ENCODE measurements at regions of chr15 and their contacts with region 1.

Region 1: GRCh38 chr15:64046347-64047153 is at the start of gene DAPK2:
- DNase-seq: peak; percentile 75 to 90 (median 84)
- ATAC-seq: peak; percentile 60 to 91 (median 86)
- H3K4me3 ChIP-seq: peak within 1 kb of the TSS; percentile 56 to 85 (median 72)
- H3K27ac ChIP-seq: peak within 1 kb of the TSS in 11 of 12 donors; percentile 60 to 88 (median 80)
- H3K4me1 ChIP-seq: peaks cover 0 to 63% (median 29%) of the 10 kb centered on the region in 12 donors
- H3K27me3 ChIP-seq: no peaks in the 10 kb centered on the region
- CTCF ChIP-seq: peak; percentile 61 to 94 (median 87)
- POLR2A ChIP-seq: no peak
- total RNA-seq, gene DAPK2: 20.4 to 56.2 (median 26.4) TPM

Region 2: GRCh38 chr15:63752075-63752684 is 294.4 kb before region 1 on chr15:
- intact Hi-C with region 1: loop called in 9 of 10 experiments (anchors 5 kb)
- DNase-seq: peak in 2 of 5 donors; percentile 25 to 36
- ATAC-seq: peak in 3 of 4 donors; percentile 78 to 90 (median 85)
- H3K4me3 ChIP-seq: no peak overlapping the region
- H3K27ac ChIP-seq: no peak overlapping the region
- H3K4me1 ChIP-seq: peaks cover 0 to 3% (median 0%) of the 10 kb centered on the region in 12 donors
- H3K27me3 ChIP-seq: no peaks in the 10 kb centered on the region
- CTCF ChIP-seq: peak; percentile 45 to 84 (median 74)
- POLR2A ChIP-seq: no peak

Region 3: GRCh38 chr15:63826528-63826927 is 220.0 kb before region 1 on chr15:
- intact Hi-C with region 1: loop called in 5 of 10 experiments (anchors 5 kb)
- DNase-seq: no peak
- ATAC-seq: no peak
- H3K4me3 ChIP-seq: no peak overlapping the region
- H3K27ac ChIP-seq: no peak overlapping the region
- H3K4me1 ChIP-seq: peaks cover 0 to 55% (median 35%) of the 10 kb centered on the region in 12 donors
- H3K27me3 ChIP-seq: no peaks in the 10 kb centered on the region
- CTCF ChIP-seq: peak in 5 of 12 donors; percentile 15 to 31 (median 19)
- POLR2A ChIP-seq: no peak

Region 4: DNA sequence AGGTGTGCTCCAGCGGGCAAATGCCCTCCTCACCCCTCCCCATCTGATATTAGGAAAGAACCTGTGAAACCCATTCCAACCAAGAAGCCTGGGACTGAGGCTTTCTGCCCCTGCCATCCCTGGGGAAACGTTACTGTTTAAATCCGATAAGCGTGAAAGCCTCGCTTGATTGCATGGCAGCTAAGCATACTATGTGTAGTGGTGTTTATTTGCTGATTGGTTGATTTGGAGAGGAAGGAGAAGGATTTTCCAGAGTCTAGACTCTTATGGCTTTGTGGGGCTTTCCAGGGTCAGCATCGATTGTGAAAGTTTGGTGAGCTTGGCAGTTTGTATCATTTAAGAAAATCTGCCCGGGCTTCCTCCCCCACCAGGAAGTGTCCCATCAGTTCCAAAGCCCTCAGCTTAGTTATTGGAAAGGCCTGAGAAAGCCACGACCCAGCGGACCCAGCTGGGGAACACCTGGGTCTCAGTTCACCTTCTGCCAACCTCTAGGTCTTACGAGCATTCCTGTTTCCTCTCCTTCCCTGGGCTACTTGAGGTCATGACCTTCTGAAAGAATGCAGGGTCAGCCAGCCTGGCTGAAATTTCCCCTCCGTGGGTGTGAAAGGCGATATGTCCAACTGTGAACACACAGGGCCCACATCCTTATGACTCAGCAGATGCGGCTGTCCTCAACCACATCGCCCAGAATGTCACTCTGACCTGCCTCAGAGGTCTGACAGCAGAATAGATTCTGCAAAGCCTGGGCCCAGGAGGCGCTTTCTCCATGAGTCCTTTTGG is 150.0 kb before region 1 on chr15:
- intact Hi-C with region 1: loop called in 2 of 10 experiments (anchors 5 to 10 kb)
- DNase-seq: peak in 2 of 5 donors; percentile 42 to 63
- ATAC-seq: peak in 3 of 4 donors; percentile 57 to 74 (median 68)
- H3K4me3 ChIP-seq: no peak overlapping the region
- H3K27ac ChIP-seq: peak overlapping the region in 2 of 12 donors; percentile 13 to 68
- H3K4me1 ChIP-seq: peaks cover 0 to 78% (median 9%) of the 10 kb centered on the region in 12 donors
- H3K27me3 ChIP-seq: no peaks in the 10 kb centered on the region
- CTCF ChIP-seq: no peak
- POLR2A ChIP-seq: no peak

Region 5: DNA sequence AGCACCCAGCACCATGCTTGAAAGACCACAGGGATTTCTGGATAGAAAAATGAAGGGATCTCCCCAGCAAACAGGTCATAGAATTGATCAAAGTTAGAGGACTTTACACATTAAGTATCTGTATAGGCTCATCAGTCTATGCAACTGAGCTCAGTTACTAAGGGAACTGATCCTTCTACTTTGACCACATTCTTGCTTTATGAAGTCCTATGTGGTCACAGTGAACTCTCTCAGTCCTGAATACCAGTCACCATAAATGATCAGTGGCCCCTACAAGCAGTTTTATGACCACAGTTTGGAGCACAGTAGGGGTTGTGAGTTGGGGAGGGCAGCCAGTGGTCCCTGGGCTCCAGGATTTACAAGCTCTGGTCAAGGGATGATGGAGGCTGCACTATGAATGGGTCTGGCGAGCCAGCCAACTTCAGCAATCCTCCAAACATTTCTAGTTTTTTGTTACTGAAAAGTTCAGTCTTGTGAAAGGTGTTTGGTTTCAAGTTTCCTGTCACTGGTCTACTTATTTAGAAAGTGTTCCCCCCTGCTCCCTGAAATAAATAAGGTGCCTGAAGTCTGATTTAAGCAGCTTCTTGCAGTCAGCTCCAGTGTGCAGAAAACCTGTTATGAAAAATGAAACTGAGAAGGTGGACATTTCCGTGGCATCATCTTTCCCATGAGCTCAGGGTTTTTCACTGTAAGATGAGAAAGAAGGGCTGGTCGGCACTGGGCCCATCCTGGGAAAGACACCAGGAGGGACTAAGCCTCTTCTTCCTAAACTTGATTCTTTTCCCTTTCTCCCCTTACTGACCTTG is 75.7 kb before region 1 on chr15:
- intact Hi-C with region 1: loop called in 2 of 10 experiments (anchors 5 to 10 kb)
- DNase-seq: no peak
- ATAC-seq: no peak
- H3K4me3 ChIP-seq: no peak overlapping the region
- H3K27ac ChIP-seq: peak overlapping the region; percentile 22 to 89 (median 77)
- H3K4me1 ChIP-seq: peaks cover 3 to 69% (median 38%) of the 10 kb centered on the region in 12 donors
- H3K27me3 ChIP-seq: no peaks in the 10 kb centered on the region
- CTCF ChIP-seq: no peak
- POLR2A ChIP-seq: no peak

Region 6: DNA sequence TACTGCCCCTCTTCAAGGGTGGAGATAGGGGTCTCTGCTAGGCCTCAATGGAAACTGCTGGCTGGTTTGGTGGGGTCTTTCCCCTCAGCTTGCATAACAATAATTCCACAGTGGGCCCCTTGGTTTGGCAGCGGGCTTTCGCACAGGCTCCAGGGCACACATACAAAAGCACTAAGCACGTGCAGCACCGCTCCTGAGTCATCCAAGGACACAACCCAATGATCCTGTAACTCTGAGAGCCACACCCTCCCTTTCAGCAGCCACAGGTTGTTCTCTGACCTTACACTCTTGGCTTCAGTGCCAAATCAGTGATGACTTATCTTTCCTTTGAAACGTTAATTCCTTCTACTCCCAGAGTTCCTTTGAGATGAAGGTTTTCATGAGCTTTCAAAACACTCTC is 42.0 kb before region 1 on chr15:
- intact Hi-C with region 1: loop called in 2 of 10 experiments (anchors 5 to 10 kb)
- DNase-seq: peak in 2 of 5 donors; percentile 49 to 51
- ATAC-seq: peak; percentile 33 to 75 (median 64)
- H3K4me3 ChIP-seq: no peak overlapping the region
- H3K27ac ChIP-seq: peak overlapping the region in 2 of 12 donors; percentile 42 to 43
- H3K4me1 ChIP-seq: peaks cover 2 to 59% (median 27%) of the 10 kb centered on the region in 12 donors
- H3K27me3 ChIP-seq: no peaks in the 10 kb centered on the region
- CTCF ChIP-seq: no peak
- POLR2A ChIP-seq: no peak

Region 7: GRCh38 chr15:64105113-64105704 is 58.7 kb after region 1 on chr15:
- intact Hi-C with region 1: no loop called
- DNase-seq: peak in 1 of 5 donors; percentile 28
- ATAC-seq: peak in 3 of 4 donors; percentile 67 to 74 (median 68)
- H3K4me3 ChIP-seq: peak overlapping the region in 1 of 12 donors; percentile 5
- H3K27ac ChIP-seq: peak overlapping the region in 9 of 12 donors; percentile 13 to 85 (median 40)
- H3K4me1 ChIP-seq: peaks cover 3 to 92% (median 41%) of the 10 kb centered on the region in 12 donors
- H3K27me3 ChIP-seq: no peaks in the 10 kb centered on the region
- CTCF ChIP-seq: no peak
- POLR2A ChIP-seq: no peak

Measured in heart left ventricle (tissue), 16 donors.